CD8-positive, alpha-beta memory T cell (primary cell): ENCODE measurements at regions of chr10 and their contacts with region 1.

Region 1: DNA sequence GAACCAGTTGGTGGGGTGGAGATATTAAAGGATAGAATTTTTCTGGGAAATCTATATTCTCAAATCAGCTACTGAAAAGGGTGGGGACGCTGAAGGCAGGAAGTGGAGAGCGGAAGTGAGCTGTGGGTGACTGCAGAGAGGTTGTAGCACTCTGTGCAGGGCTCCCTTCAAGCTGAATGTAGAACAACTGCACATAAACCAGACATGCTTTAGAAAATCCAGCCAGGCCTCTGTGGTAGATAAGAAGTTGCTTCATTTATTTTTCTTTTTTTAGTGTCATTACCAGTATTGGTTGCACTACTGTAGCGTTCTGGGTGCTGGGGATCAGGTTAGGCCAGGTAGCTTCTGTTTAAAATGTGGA is 127.8 kb downstream of the CELF2 start:
- DNase-seq: peak; percentile 49 to 84 (median 75)
- H3K4me3 ChIP-seq: peak overlapping the region; percentile 38
- H3K4me3 Mint-ChIP-seq: peak overlapping the region; percentile 26 to 82 (median 75)
- H3K27ac ChIP-seq: peak overlapping the region; percentile 40
- H3K27ac Mint-ChIP-seq: peak overlapping the region; percentile 97 to 100 (median 99)
- H3K4me1 ChIP-seq: peaks cover 99% of the 10 kb centered on the region
- H3K4me1 Mint-ChIP-seq: peaks cover 94 to 96% (median 95%) of the 10 kb centered on the region in 3 donors
- H3K27me3 ChIP-seq: no peaks in the 10 kb centered on the region
- H3K27me3 Mint-ChIP-seq: no peaks in the 10 kb centered on the region

Region 2: GRCh38 chr10:11113156-11113555 is 32.3 kb before region 1 on chr10:
- CTCF ChIA-PET with region 1: interaction called, 14 read pairs
- POLR2A ChIA-PET with region 1: interaction called, 3 read pairs
- DNase-seq: peak in 3 of 5 donors; percentile 52 to 56 (median 55)
- H3K4me3 ChIP-seq: no peak overlapping the region
- H3K4me3 Mint-ChIP-seq: peak overlapping the region in 4 of 7 donors; percentile 10 to 66 (median 24)
- H3K27ac ChIP-seq: no peak overlapping the region
- H3K27ac Mint-ChIP-seq: peak overlapping the region in 7 of 8 donors; percentile 49 to 96 (median 74)
- H3K4me1 ChIP-seq: peaks cover 9% of the 10 kb centered on the region
- H3K4me1 Mint-ChIP-seq: peaks cover 11 to 27% (median 14%) of the 10 kb centered on the region in 3 donors
- H3K27me3 ChIP-seq: no peaks in the 10 kb centered on the region
- H3K27me3 Mint-ChIP-seq: no peaks in the 10 kb centered on the region

Region 3: GRCh38 chr10:11131112-11131639 is 14.3 kb before region 1 on chr10:
- CTCF ChIA-PET with region 1: no interaction called
- POLR2A ChIA-PET with region 1: no interaction called
- DNase-seq: no peak
- H3K4me3 ChIP-seq: no peak overlapping the region
- H3K4me3 Mint-ChIP-seq: no peak overlapping the region
- H3K27ac ChIP-seq: no peak overlapping the region
- H3K27ac Mint-ChIP-seq: no peak overlapping the region
- H3K4me1 ChIP-seq: no peaks in the 10 kb centered on the region
- H3K4me1 Mint-ChIP-seq: peaks cover 0 to 2% (median 0%) of the 10 kb centered on the region in 3 donors
- H3K27me3 ChIP-seq: no peaks in the 10 kb centered on the region
- H3K27me3 Mint-ChIP-seq: no peaks in the 10 kb centered on the region

Region 4: GRCh38 chr10:11159543-11160215 is 14.2 kb after region 1 on chr10:
- CTCF ChIA-PET with region 1: interaction called, 288 read pairs
- POLR2A ChIA-PET with region 1: interaction called, 155 read pairs
- DNase-seq: no peak
- H3K4me3 ChIP-seq: no peak overlapping the region
- H3K4me3 Mint-ChIP-seq: peak overlapping the region in 2 of 7 donors; percentile 4 to 23
- H3K27ac ChIP-seq: no peak overlapping the region
- H3K27ac Mint-ChIP-seq: peak overlapping the region in 6 of 8 donors; percentile 31 to 74 (median 44)
- H3K4me1 ChIP-seq: peaks cover 91% of the 10 kb centered on the region
- H3K4me1 Mint-ChIP-seq: peaks cover 86 to 97% (median 96%) of the 10 kb centered on the region in 3 donors
- H3K27me3 ChIP-seq: no peaks in the 10 kb centered on the region
- H3K27me3 Mint-ChIP-seq: no peaks in the 10 kb centered on the region

Region 5: GRCh38 chr10:11165591-11166543 is 20.4 kb after region 1 on chr10:
- CTCF ChIA-PET with region 1: interaction called, 288 read pairs
- POLR2A ChIA-PET with region 1: interaction called, 155 read pairs
- DNase-seq: peak; percentile 59 to 89 (median 82)
- H3K4me3 ChIP-seq: peak overlapping the region; percentile 72
- H3K4me3 Mint-ChIP-seq: peak overlapping the region in 2 of 7 donors; percentile 99 to 100
- H3K27ac ChIP-seq: peak overlapping the region; percentile 92
- H3K27ac Mint-ChIP-seq: peak overlapping the region in 7 of 8 donors; percentile 91 to 100 (median 99)
- H3K4me1 ChIP-seq: peaks cover 59% of the 10 kb centered on the region
- H3K4me1 Mint-ChIP-seq: peaks cover 39 to 46% (median 45%) of the 10 kb centered on the region in 3 donors
- H3K27me3 ChIP-seq: no peaks in the 10 kb centered on the region
- H3K27me3 Mint-ChIP-seq: peaks cover 0 to 2% of the 10 kb centered on the region in 2 donors

Region 6: GRCh38 chr10:11170993-11171851 is 25.7 kb after region 1 on chr10:
- CTCF ChIA-PET with region 1: interaction called, 288 read pairs
- POLR2A ChIA-PET with region 1: interaction called, 155 read pairs
- DNase-seq: peak in 1 of 5 donors; percentile 31
- H3K4me3 ChIP-seq: peak overlapping the region; percentile 72
- H3K4me3 Mint-ChIP-seq: no peak overlapping the region
- H3K27ac ChIP-seq: peak overlapping the region; percentile 92
- H3K27ac Mint-ChIP-seq: peak overlapping the region in 1 of 8 donors; percentile 8
- H3K4me1 ChIP-seq: peaks cover 81% of the 10 kb centered on the region
- H3K4me1 Mint-ChIP-seq: peaks cover 0 to 7% (median 6%) of the 10 kb centered on the region in 3 donors
- H3K27me3 ChIP-seq: no peaks in the 10 kb centered on the region
- H3K27me3 Mint-ChIP-seq: no peaks in the 10 kb centered on the region

Region 7: DNA sequence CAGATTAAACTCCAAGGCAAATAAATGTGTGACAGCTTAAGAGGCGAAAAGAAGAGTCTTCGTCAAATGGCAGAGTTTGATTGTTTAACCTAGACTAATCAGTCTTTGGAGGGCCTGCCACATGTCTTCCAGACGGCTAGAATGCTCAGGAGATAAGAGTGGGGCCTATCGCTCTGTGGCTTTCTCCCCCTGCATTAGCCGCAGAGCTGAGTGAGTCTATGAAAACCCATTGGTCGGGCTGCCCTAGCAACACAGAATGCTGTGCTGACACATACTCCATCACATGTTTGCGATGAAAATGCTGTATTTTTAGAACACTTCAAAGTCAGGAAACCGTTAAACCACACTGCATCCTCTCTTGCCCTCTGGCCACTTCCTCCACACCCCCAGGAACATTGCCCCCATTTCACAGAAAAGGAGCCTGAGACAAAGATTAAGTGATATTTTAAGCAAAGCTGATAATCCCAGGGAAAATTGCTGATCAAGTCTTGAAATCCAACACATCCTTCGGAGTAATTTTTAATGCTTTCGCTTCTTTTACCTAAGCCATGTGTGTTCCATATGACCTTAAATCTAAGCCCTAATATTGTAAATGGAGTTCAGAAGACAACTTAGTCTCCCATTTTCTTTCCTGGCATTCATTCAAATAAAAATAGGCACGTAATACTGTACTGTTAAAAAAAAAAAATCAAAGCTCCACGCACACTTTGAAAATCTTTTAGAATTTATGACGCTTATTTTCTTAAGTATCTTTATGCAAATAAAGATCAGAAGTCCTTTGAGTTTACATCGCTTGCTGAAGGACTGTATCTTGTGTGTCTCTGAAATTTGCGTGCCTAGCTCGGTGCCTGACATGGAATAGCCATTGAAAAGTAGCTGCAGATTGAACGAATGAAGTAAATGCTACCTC is 33.4 kb after region 1 on chr10:
- CTCF ChIA-PET with region 1: interaction called, 288 read pairs
- POLR2A ChIA-PET with region 1: interaction called, 17 read pairs
- DNase-seq: peak; percentile 80 to 95 (median 89)
- H3K4me3 ChIP-seq: peak overlapping the region; percentile 42
- H3K4me3 Mint-ChIP-seq: peak overlapping the region in 3 of 7 donors; percentile 69 to 89 (median 78)
- H3K27ac ChIP-seq: peak overlapping the region; percentile 69
- H3K27ac Mint-ChIP-seq: peak overlapping the region in 1 of 8 donors; percentile 96
- H3K4me1 ChIP-seq: peaks cover 96% of the 10 kb centered on the region
- H3K4me1 Mint-ChIP-seq: peaks cover 0 to 31% (median 0%) of the 10 kb centered on the region in 3 donors
- H3K27me3 ChIP-seq: no peaks in the 10 kb centered on the region
- H3K27me3 Mint-ChIP-seq: no peaks in the 10 kb centered on the region

Region 8: DNA sequence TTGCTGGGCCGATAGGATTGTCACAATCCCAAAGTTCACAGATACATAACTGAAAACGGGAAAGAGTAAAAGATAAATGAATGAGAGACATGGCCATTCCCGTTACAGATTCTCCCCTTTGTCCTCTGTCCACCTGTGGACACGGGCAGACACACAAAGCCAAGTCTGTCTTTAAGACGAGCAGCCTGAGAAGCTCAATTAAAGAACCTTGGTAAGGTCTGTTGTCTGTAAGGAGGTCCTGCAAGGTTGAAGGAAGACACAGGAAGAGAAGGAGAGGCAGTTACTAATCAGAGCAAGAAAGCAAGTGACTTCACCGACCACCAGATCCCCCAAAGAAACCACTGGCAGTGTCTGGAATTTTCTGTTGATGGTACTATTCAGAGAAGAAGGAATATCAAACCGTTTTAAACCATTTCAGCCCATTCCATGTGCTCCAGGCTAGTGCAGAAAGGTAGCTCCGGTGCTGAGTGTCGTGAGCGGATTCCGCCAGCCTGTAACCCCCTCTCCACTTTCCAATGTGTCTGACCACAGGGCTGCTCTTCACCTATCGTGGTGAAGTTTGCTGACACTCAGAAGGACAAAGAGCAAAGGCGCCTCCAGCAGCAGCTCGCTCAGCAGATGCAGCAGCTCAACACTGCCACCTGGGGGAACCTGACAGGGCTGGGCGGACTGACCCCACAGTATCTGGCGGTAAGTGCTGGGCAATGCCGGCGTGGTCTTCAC is 124.8 kb after region 1 on chr10:
- CTCF ChIA-PET with region 1: interaction called, 22 read pairs
- POLR2A ChIA-PET with region 1: no interaction called
- DNase-seq: peak; percentile 50 to 78 (median 65)
- H3K4me3 ChIP-seq: no peak overlapping the region
- H3K4me3 Mint-ChIP-seq: peak overlapping the region; percentile 24 to 80 (median 38)
- H3K27ac ChIP-seq: peak overlapping the region; percentile 1
- H3K27ac Mint-ChIP-seq: peak overlapping the region; percentile 2 to 98 (median 84)
- H3K4me1 ChIP-seq: peaks cover 26% of the 10 kb centered on the region
- H3K4me1 Mint-ChIP-seq: peaks cover 70 to 93% (median 85%) of the 10 kb centered on the region in 3 donors
- H3K27me3 ChIP-seq: no peaks in the 10 kb centered on the region
- H3K27me3 Mint-ChIP-seq: peaks cover 0 to 3% of the 10 kb centered on the region in 2 donors